ENCODE measurements at regions of chr11 and their contacts with region 1.

Region 1: DNA sequence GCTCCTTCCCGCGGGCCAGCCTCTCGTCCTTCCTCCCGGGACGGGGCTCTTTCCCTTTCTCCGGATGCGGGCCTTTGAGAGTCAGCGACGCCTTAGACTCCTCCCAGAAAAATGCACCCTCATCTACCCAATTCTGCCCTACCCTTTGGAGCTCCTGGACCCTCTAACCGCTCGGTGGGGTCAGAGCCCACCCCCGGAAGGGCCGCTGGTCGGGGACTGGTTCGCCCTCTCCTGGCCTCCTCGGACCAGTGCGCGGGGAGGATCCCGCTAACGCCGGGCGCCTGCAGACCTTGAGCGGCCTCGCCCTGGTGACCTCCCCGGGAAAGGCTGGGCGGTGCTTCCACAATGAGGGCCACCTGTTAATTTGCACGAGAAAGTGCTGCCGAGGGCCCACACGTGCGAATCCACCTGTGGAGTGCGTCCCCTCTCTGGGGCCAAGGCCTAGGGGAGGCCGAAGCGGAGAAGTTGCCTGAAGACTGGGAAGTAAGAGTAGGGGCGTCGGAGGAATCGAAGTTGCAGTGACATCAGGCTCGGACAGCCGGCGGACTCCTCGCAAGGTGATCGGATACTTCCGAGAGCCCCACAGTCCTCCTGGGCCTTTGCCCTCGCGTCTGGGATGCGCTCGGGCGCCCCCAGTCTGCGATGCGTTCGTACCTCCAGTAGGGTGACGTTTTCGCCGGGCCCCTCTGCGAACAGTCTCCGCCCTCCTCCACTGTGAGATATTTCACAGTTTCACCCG is 61.5 kb downstream of the ENDOD1 start:
- DNase-seq: peak; percentile 90
- H3K4me3 ChIP-seq: peak overlapping the region; percentile 46 to 52 (median 50)
- H3K27ac ChIP-seq: peak overlapping the region; percentile 89
- H3K4me1 ChIP-seq: peaks cover 64% of the 10 kb centered on the region
- H3K27me3 ChIP-seq: no peaks in the 10 kb centered on the region
- CTCF ChIP-seq: peak; percentile 78 to 84

Region 2: DNA sequence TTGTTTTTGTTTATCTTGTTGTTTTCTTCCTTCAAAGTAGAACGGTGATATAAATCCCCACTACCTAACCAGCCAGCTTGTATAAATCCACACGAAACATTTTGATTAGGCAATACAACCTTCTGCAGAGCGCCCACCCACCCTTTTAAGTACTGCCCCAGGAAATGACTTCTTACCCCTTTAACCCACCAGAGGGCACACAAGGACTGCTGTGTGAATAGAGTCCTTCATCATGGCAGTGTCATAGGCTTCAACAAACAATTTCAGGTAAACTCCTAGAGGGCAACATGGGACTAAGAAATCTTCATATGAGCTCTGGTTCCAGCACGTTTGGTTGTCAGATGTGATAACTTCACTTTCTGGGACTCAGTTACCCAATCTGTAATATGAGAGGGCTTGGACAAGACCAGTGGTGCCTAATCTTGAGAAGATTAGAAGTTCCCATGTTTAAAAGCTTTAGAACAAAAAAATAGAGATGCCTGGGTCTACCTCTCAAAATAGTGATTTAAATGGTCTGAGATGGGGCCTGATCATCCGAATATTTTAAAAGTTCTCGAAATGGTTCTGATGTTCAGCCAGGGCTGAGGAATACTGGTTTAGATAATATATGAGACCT is 527.9 kb before region 1 on chr11:
- CTCF ChIA-PET with region 1: interaction called, 5 read pairs
- dilution Hi-C with region 1: no loop called
- in situ Hi-C with region 1: no loop called
- intact Hi-C with region 1: loop called (anchors 1 kb)
- DNase-seq: peak; percentile 70
- H3K4me3 ChIP-seq: no peak overlapping the region
- H3K27ac ChIP-seq: no peak overlapping the region
- H3K4me1 ChIP-seq: no peaks in the 10 kb centered on the region
- H3K27me3 ChIP-seq: no peaks in the 10 kb centered on the region
- CTCF ChIP-seq: peak; percentile 91 to 94

Region 3: GRCh38 chr11:95067039-95067840 is 83.9 kb before region 1 on chr11:
- CTCF ChIA-PET with region 1: interaction called, 3 read pairs
- dilution Hi-C with region 1: loop called (anchors 5 kb)
- in situ Hi-C with region 1: loop called in 1 of 2 experiments (anchors 10 kb)
- intact Hi-C with region 1: loop called (anchors 1 kb)
- DNase-seq: peak; percentile 74
- H3K4me3 ChIP-seq: peak overlapping the region; percentile 86 to 99 (median 96)
- H3K27ac ChIP-seq: peak overlapping the region; percentile 90
- H3K4me1 ChIP-seq: peaks cover 30% of the 10 kb centered on the region
- H3K27me3 ChIP-seq: no peaks in the 10 kb centered on the region
- CTCF ChIP-seq: peak; percentile 10 to 62

Region 4: DNA sequence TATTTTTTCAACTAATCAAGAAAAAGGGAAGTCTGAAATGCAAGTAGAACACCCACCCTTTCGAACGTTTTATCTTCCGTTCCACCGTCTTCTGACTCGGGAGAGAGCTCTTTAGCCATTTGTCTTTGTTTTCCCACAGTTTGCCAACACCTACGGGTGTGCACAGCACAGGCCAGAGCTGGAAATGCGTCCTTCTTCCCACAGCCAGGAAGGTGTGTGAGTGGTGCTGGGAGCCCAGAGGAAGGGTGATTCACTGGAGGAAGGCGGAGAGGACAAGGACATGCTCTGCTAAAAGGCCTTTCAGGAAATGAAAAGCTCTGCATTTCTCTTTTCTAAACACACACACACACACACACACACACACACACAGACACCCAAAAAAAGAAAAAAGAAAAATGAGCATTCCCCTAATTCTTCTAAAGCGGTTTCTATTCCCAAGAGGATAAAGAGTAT is 42.9 kb before region 1 on chr11:
- CTCF ChIA-PET with region 1: no interaction called
- dilution Hi-C with region 1: no loop called
- in situ Hi-C with region 1: no loop called
- intact Hi-C with region 1: loop called (anchors 5 kb)
- DNase-seq: peak; percentile 83
- H3K4me3 ChIP-seq: no peak overlapping the region
- H3K27ac ChIP-seq: peak overlapping the region; percentile 22
- H3K4me1 ChIP-seq: peaks cover 34% of the 10 kb centered on the region
- H3K27me3 ChIP-seq: no peaks in the 10 kb centered on the region
- CTCF ChIP-seq: no peak

Region 5: DNA sequence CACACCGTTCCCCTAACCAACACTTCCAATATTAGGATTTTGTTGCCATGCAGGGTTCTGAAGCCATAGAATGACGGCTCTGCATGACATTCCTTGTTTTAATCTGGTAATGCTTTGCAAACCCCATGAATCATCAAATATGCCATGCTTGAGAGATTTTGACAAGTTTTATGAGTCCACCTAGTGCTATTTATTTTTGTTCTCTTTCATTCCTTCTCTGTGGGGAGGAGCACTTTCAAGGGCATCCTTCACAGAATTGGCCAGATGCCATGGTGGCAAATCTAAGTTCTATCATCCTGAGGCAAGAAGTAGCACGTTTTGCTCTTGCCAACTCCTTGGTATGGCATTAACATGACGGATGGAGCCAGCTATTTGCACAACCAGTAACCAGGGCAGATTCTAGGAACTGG is 370.0 kb after region 1 on chr11:
- CTCF ChIA-PET with region 1: no interaction called
- dilution Hi-C with region 1: no loop called
- in situ Hi-C with region 1: no loop called
- intact Hi-C with region 1: loop called (anchors 2 kb)
- DNase-seq: peak; percentile 93
- H3K4me3 ChIP-seq: no peak overlapping the region
- H3K27ac ChIP-seq: peak overlapping the region; percentile 87
- H3K4me1 ChIP-seq: peaks cover 48% of the 10 kb centered on the region
- H3K27me3 ChIP-seq: no peaks in the 10 kb centered on the region
- CTCF ChIP-seq: no peak

Region 6: GRCh38 chr11:95764267-95764898 is 613.3 kb after region 1 on chr11:
- CTCF ChIA-PET with region 1: no interaction called
- dilution Hi-C with region 1: no loop called
- in situ Hi-C with region 1: loop called (anchors 5 kb)
- intact Hi-C with region 1: loop called (anchors 1 kb)
- DNase-seq: peak; percentile 37
- H3K4me3 ChIP-seq: no peak overlapping the region
- H3K27ac ChIP-seq: no peak overlapping the region
- H3K4me1 ChIP-seq: peaks cover 8% of the 10 kb centered on the region
- H3K27me3 ChIP-seq: no peaks in the 10 kb centered on the region
- CTCF ChIP-seq: peak; percentile 45 to 61